Tibial artery (tissue), 4 donors: ENCODE measurements at regions of chr7 and their contacts with region 1.

Region 1: DNA sequence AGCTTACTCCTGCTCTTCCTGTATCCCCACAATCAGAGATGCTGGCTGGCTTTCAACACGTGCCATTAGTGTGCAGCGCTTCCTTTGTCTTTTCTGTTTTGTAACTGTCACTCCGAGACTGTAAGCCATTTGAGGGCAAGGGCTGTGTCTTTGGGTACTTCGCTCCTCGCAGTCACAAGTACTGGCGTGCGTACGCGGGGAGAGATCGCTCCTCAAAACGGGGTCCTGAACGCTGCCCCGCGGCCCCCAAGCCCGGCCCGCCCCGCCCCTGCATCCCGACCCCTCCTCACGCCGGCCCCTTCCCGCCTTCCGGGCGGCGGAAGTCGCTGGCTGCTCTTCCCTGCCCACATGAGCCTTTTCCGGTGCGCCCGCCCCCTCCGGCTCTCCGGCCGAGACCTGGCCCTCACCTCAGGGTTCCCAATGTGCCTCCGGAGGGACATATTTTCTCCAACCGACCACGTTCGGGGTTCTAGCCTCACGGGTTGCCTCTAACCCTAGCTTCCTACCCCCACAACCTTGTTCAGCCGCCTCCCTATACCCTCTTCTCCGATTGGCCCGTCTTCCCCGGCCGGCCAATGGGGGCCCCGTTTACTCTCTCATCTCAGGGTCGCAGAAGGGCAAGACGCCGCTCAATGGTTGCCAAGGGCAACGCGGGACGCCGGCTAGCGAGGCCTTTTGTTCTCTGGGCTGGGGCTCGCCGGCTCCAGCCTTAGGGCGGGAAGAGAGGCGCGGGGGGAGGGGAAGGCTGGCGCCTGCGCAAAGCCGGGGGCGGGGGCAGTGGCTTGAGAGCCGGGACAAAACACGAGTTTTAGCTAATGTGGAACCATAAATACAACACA is at the start of gene CEP41:
- DNase-seq: peak; percentile 95 to 98
- H3K4me3 ChIP-seq: peak within 1 kb of the TSS; percentile 66 to 85
- H3K27ac ChIP-seq: peak within 1 kb of the TSS; percentile 81
- H3K4me1 ChIP-seq: peaks cover 0 to 14% (median 5%) of the 10 kb centered on the region in 4 donors
- H3K27me3 ChIP-seq: no peaks in the 10 kb centered on the region
- CTCF ChIP-seq: no peak

Region 2: DNA sequence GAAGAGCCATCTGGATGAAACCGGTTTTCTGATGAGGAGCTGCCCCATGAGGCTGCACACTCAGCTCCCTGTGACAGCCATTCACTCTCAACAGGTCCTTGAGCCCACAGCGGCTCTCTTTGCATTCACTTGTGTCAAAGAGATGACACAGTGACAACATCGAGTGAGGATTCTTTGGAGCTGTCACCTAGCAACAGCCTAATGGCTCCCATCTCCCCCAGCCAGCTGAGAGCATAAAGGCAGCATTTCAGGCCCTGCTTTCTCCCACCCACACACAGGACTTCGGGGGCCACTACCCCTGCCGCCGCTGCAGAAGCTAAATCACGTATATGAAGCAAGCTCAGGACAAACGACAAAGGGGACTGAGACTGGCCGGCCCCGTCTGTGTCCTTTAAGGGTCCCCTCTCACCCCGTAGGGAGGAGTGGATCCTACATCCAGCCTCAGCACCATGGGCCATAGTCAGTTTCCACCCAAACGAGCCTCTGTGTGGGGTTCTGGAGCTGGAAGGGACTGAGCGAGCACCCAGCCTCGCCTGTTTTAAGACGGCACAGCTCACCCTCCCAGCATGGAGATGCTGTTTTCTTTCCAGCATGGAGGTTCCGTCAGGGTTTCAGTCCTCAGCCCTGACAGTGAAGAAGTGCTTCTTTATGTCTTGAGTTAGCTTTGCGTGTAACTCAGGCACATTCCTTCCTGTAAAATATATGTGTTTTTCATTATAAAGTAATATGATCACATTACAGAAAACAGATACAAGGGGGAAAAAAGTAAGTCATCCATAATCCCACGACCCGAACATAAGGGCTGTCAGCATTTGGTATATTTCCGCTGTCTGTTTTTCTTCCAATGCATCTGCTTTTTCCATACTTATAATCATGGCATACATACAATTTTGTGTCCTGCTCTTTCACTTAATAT is 142.9 kb before region 1 on chr7:
- intact Hi-C with region 1: loop called (anchors 5 kb)
- DNase-seq: no peak
- H3K4me3 ChIP-seq: no peak overlapping the region
- H3K27ac ChIP-seq: no peak overlapping the region
- H3K4me1 ChIP-seq: peaks cover 0 to 17% (median 11%) of the 10 kb centered on the region in 4 donors
- H3K27me3 ChIP-seq: no peaks in the 10 kb centered on the region
- CTCF ChIP-seq: no peak